AG04450 (cell line): ENCODE measurements at regions of chr22 and their contacts with region 1.

Region 1: DNA sequence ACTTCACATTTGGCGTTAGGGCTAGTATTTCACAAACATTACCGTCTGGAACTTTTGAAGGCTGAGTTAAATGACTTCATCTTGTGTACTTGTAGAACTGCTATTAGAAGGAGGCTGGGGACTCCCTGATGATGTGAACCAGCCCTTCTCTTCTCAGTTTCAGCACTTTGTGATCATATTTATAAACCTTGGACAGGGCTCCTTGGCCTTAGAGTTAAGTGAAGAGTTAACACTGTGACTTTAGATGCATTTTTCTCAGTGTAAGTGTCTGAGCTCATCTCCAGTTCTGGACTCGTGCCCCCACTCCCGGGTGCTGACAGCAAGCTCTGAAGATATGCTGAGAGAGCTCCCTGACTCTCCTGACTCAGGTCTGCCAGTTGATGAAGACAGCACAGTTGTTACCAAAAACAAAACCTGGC is 8.4 kb downstream of the MIAT start:
- DNase-seq: no peak
- H3K4me3 ChIP-seq: no peak overlapping the region
- H3K27ac ChIP-seq: no peak overlapping the region
- H3K27me3 ChIP-seq: no peaks in the 10 kb centered on the region
- CTCF ChIP-seq: no peak

Region 2: DNA sequence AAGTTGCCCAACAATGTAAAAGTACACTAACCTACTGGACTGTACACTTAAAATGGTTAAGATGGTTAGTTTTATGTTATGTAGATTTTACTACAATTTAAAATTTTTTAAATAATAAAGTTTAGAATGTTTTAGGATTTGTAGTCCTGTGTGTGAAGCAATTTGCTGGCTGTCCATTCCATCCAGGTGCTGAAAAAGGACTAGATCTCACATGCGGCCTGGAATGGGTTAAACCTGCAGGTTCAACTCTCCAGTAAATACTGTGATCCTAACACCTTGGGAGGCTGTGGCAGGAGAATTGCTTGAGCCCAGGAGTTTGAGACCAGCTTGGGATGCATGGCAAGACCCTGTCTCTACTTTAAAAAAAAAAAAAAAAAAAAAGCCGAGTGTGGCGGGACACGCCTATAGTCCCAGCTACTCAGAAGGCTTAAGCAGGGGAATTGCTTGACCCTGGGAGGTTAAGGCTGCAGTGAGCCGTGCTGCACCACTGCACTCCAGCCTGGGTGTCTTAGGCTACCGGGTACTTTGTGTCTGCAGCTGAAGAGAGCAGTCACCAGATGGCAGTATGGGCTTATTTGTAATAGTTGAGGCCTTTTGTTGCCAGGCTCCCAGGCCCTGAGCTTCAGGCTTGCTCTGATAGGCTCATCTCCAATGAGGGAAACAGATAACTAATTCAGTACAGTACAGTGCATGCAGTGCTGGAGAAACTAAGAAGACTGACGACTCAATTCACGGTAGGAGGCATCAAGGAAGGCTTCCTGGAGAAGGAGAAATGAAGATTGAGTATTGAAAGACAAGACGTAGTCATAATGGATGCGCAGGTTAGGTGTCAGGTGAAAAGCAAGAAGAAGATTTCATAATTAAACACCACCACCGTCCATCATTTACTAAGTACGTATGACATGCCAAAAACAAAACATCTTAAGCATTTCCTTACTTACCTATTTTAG is 301.5 kb before region 1 on chr22:
- CTCF ChIA-PET with region 1: interaction called, 22 read pairs
- POLR2A ChIA-PET with region 1: no interaction called
- DNase-seq: peak; percentile 59
- H3K4me3 ChIP-seq: no peak overlapping the region
- H3K27ac ChIP-seq: no peak overlapping the region
- H3K27me3 ChIP-seq: no peaks in the 10 kb centered on the region
- CTCF ChIP-seq: peak; percentile 81

Region 3: DNA sequence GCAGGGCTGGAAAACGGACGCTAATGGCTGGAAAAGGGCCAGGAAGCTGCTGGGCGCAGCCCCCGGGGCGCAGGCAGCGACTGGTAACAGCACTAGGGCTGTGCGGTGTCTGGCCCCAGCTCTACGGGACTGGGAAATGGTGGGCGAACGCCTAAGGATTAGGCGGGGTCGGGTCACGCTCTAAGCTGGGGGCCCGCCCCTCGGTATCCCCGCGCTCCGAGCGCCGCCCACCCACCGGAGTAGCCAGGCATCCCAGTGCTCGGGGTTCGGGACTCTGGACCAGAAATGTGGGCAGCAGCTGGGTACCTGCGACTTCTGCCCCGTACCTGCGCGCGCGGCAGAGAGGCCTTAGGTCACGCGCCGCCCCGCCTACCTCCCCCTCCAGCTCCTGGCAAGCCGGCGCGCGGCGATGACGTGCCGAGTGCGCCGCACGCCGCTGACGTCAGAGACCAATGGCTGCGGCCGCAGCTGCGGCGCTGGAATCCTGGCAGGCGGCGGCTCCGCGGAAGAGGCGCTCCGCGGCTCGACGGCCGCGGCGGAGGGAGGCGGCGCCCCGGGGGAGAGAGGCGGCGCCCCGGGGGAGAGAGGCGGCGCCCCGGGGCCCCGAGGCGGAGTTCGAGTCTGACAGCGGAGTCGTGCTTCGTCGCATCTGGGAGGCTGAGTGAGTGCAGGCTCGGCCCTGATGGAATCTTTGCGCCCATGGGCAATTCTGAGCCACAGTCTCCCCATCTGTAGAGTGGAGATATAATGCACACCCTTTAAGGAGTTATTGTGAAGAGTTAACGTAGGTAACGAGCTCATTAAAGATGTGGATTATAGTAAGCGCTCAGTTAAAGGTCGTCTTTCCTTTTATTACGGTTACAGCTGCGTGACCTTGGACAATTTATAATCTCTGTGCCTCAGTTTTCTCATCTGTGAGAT is 182.1 kb before region 1 on chr22 and contains the starts of genes HPS4 and SRRD:
- CTCF ChIA-PET with region 1: interaction called, 10 read pairs
- POLR2A ChIA-PET with region 1: no interaction called
- DNase-seq: peak; percentile 59
- H3K4me3 ChIP-seq: peak within 1 kb of the TSS; percentile 91
- H3K27ac ChIP-seq: peak within 1 kb of the TSS; percentile 85
- H3K27me3 ChIP-seq: no peaks in the 10 kb centered on the region
- CTCF ChIP-seq: no peak
- polyA plus RNA-seq, gene HPS4: 24.4 and 30.9 TPM in 2 replicates
- polyA plus RNA-seq, gene SRRD: 32.1 and 38.5 TPM in 2 replicates

Region 4: GRCh38 chr22:26502688-26503561 is 162.9 kb before region 1 on chr22:
- CTCF ChIA-PET with region 1: interaction called, 69 read pairs
- POLR2A ChIA-PET with region 1: interaction called, 3 read pairs
- DNase-seq: no peak
- H3K4me3 ChIP-seq: no peak overlapping the region
- H3K27ac ChIP-seq: no peak overlapping the region
- H3K27me3 ChIP-seq: no peaks in the 10 kb centered on the region
- CTCF ChIP-seq: peak; percentile 60

Region 5: GRCh38 chr22:26679003-26679629 is 13.3 kb after region 1 on chr22:
- CTCF ChIA-PET with region 1: interaction called, 12 read pairs
- POLR2A ChIA-PET with region 1: no interaction called
- DNase-seq: peak; percentile 46
- H3K4me3 ChIP-seq: no peak overlapping the region
- H3K27ac ChIP-seq: no peak overlapping the region
- H3K27me3 ChIP-seq: no peaks in the 10 kb centered on the region
- CTCF ChIP-seq: peak; percentile 96